SK-N-SH (cell line): ENCODE measurements at regions of chr12 and their contacts with region 1.

Region 1: GRCh38 chr12:49967042-49967776 is 5.5 kb downstream of the AQP5 start:
- DNase-seq: peak; percentile 94
- H3K4me3 ChIP-seq: peak overlapping the region; percentile 47 to 64
- H3K27ac ChIP-seq: peak overlapping the region in 1 of 2 experiments; percentile 60; a peak in 1 of 4 replicates
- H3K4me1 ChIP-seq: peaks cover 10 to 25% of the 10 kb centered on the region in 2 experiments; a peak in 2 of 4 replicates
- H3K27me3 ChIP-seq: no peaks in the 10 kb centered on the region
- CTCF ChIP-seq: peak; percentile 74
- EP300 ChIP-seq: 0 out of 4 replicates have a peak, but pooled peaks of 1 of the 2 experiments have one; percentile 2
- RAD21 ChIP-seq: peak; percentile 94

Region 2: GRCh38 chr12:49623142-49623904 is 343.9 kb before region 1 on chr12 and contains the start of gene PRPF40B:
- CTCF ChIA-PET with region 1: no interaction called
- POLR2A ChIA-PET with region 1: no interaction called
- DNase-seq: peak; percentile 99
- H3K4me3 ChIP-seq: peak within 1 kb of the TSS; percentile 63 to 67
- H3K27ac ChIP-seq: peak within 1 kb of the TSS; percentile 79 to 86
- H3K4me1 ChIP-seq: peaks cover 14 to 43% of the 10 kb centered on the region in 2 experiments; a peak in 3 of 4 replicates
- H3K27me3 ChIP-seq: no peaks in the 10 kb centered on the region
- CTCF ChIP-seq: peak; percentile 42
- EP300 ChIP-seq: 0 out of 4 replicates have a peak, but pooled peaks of 1 of the 2 experiments have one; percentile 33
- RAD21 ChIP-seq: peak; percentile 18; the same call in 1 of the 2 replicates
- polyA plus RNA-seq, gene PRPF40B: 24.3 and 27.0 TPM in 2 replicates

Region 3: GRCh38 chr12:49866859-49867579 is 100.2 kb before region 1 on chr12:
- CTCF ChIA-PET with region 1: interaction called, 312 read pairs
- POLR2A ChIA-PET with region 1: interaction called, 3 read pairs
- DNase-seq: peak; percentile 89
- H3K4me3 ChIP-seq: no peak overlapping the region; a peak in 1 of 4 replicates
- H3K27ac ChIP-seq: no peak overlapping the region
- H3K4me1 ChIP-seq: peaks cover 32 to 52% of the 10 kb centered on the region in 2 experiments
- H3K27me3 ChIP-seq: no peaks in the 10 kb centered on the region
- CTCF ChIP-seq: peak; percentile 96
- EP300 ChIP-seq: no peak
- RAD21 ChIP-seq: peak; percentile 93

Region 4: DNA sequence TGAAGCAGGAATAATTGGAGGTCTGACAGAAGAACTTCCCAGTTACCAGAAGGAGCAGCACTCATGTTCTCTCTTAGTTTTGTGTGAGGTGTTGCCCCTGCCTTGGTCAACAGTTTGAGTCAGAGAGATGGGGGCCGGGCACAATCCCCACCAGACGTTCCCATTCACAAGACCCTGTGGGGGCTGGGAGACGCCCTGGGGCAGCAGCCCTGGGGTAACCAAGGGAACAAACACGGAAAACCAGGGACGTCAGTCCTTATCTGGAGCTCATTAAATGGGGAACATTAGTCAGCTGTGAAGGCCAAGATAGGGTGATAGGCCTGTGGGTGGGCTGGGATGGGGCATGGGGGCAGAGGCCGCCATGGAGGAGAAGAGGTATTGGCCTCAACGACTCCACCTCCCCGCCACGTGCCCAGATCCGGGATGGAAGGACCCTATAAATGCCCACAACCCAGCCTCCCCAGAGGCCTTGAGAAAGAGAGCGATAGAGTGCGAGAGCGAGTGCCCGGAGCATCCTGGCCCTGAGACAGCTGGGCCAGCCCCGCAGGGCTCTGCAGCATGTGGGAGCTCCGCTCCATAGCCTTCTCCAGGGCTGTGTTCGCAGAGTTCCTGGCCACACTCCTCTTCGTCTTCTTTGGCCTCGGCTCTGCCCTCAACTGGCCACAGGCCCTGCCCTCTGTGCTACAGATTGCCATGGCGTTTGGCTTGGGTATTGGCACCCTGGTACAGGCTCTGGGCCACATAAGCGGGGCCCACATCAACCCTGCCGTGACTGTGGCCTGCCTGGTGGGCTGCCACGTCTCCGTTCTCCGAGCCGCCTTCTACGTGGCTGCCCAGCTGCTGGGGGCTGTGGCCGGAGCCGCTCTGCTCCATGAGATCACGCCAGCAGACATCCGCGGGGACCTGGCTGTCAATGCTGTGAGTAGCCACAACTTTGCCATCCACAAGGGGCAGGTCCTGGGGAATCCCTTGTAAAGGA is 16.6 kb before region 1 on chr12 and contains the start of gene AQP2:
- CTCF ChIA-PET with region 1: interaction called, 56 read pairs
- POLR2A ChIA-PET with region 1: no interaction called
- DNase-seq: peak; percentile 64
- H3K4me3 ChIP-seq: no peak within 1 kb of the TSS
- H3K27ac ChIP-seq: no peak within 1 kb of the TSS
- H3K4me1 ChIP-seq: peaks cover 0 to 20% of the 10 kb centered on the region in 2 experiments; a peak in 1 of 4 replicates
- H3K27me3 ChIP-seq: no peaks in the 10 kb centered on the region
- CTCF ChIP-seq: no peak
- EP300 ChIP-seq: no peak
- RAD21 ChIP-seq: no peak
- polyA plus RNA-seq, gene AQP2: not detected in 2 replicates

Region 5: DNA sequence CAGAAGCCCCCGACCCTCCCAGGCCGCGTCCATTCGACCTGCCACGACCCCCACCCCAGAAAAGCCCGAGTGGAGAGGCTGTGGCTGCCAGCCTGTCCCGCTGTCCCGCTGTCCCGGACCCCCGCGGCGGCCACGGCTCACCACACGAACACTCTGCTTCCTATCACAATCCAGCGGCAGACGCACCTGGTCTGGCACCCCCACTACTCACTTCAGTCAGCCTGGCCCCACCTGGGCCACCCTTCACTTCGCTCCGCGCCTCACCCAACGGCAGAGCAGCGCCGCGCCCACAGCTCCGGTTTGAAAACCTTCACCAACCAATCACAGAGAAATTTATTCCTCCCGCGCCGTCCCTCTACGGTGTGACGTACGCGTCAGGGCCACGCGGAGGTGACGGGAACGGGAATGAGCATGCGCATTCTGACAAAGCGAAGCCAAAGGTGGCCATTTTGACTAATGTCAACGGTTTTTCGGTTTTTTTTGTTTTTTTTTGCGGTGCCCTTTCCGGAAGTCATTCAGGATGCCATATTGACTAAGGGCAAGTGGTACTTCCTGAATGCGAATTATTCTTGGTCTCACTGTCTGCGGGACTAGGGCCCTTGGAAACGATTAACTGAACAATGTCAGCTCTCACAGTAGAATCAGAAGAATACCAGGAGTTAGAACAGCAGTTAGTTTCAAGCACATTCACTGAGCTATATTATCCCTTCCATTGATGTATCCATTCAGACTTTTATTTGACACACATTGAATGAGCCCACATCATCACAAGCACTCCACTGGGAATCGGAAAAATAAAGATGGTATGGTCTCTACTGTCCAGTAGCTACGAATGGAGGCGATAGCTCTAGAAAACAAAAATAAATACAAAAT is 58.2 kb after region 1 on chr12 and contains the start of gene RACGAP1:
- CTCF ChIA-PET with region 1: interaction called, 21 read pairs
- POLR2A ChIA-PET with region 1: no interaction called
- DNase-seq: peak; percentile 96
- H3K4me3 ChIP-seq: peak within 1 kb of the TSS; percentile 67 to 73
- H3K27ac ChIP-seq: peak within 1 kb of the TSS; percentile 40 to 86; a peak in 3 of 4 replicates
- H3K4me1 ChIP-seq: peaks cover 0 to 2% of the 10 kb centered on the region in 2 experiments; a peak in 3 of 4 replicates
- H3K27me3 ChIP-seq: no peaks in the 10 kb centered on the region
- CTCF ChIP-seq: no peak
- EP300 ChIP-seq: peak in 1 of 2 experiments; percentile 47; a peak in 1 of 4 replicates
- RAD21 ChIP-seq: no peak; the same call in 1 of the 2 replicates
- polyA plus RNA-seq, gene RACGAP1: 21.5 and 23.4 TPM in 2 replicates

Region 6: DNA sequence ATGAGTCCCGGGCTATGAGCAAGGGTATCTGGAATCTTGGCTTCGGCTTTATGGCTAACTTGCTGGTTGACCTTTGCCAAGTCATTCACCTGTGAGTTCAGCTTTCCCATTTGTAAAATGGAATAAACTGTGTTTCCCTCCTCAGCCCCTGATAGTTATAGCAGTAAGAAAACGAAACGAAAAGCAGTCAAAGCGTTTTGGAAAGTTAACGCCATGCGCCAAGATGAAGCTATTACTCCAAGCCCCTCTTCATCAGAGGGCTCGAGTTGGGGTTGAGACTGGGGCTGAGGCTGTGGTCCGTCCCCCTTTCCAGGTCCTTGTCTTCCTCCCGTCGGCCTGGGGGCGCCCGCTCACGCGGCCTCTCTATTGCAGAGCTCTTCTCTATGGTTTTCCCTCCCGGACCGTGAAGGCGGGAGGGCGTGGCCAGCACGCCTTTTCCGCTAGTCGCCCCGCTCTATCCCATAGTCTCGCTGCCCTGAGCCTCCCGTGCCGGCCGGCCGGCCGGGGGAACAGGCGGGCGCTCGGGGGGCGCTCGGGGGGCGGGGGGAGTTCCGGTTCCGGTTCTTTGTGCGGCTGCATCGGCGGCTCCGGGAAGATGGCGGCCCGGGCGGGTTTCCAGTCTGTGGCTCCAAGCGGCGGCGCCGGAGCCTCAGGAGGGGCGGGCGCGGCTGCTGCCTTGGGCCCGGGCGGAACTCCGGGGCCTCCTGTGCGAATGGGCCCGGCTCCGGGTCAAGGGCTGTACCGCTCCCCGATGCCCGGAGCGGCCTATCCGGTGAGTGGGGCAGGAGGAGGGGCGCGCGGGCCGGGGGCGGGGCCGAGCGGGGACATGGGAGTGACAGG is 117.8 kb after region 1 on chr12 and contains the start of gene SMARCD1:
- CTCF ChIA-PET with region 1: interaction called, 1,401 read pairs
- POLR2A ChIA-PET with region 1: interaction called, 4 read pairs
- DNase-seq: peak; percentile 98
- H3K4me3 ChIP-seq: peak within 1 kb of the TSS; percentile 77 to 79
- H3K27ac ChIP-seq: peak within 1 kb of the TSS; percentile 87 to 91
- H3K4me1 ChIP-seq: peaks cover 18 to 22% of the 10 kb centered on the region in 2 experiments
- H3K27me3 ChIP-seq: no peaks in the 10 kb centered on the region
- CTCF ChIP-seq: peak; percentile 67
- EP300 ChIP-seq: no peak
- RAD21 ChIP-seq: no peak
- polyA plus RNA-seq, gene SMARCD1: 58.5 and 77.2 TPM in 2 replicates

Region 7: GRCh38 chr12:50132505-50133135 is 165.4 kb after region 1 on chr12:
- CTCF ChIA-PET with region 1: interaction called, 11 read pairs
- POLR2A ChIA-PET with region 1: no interaction called
- DNase-seq: peak; percentile 38
- H3K4me3 ChIP-seq: no peak overlapping the region; a peak in 1 of 4 replicates
- H3K27ac ChIP-seq: 0 out of 4 replicates have a peak overlapping the region, but pooled peaks of 1 of the 2 experiments have one; percentile 19
- H3K4me1 ChIP-seq: peaks cover 3 to 10% of the 10 kb centered on the region in 2 experiments; a peak in 3 of 4 replicates
- H3K27me3 ChIP-seq: no peaks in the 10 kb centered on the region
- CTCF ChIP-seq: peak; percentile 80
- EP300 ChIP-seq: no peak
- RAD21 ChIP-seq: peak; percentile 70